ENCODE measurements at regions of chr14 and their contacts with region 1.

Region 1: GRCh38 chr14:61160798-61161197 is 120.3 kb downstream of the TMEM30B start:
- DNase-seq: no peak
- ATAC-seq: no peak
- H3K4me3 ChIP-seq: no peak overlapping the region
- H3K27ac ChIP-seq: no peak overlapping the region
- H3K4me1 ChIP-seq: no peaks in the 10 kb centered on the region
- H3K27me3 ChIP-seq: no peaks in the 10 kb centered on the region
- CTCF ChIP-seq: no peak

Region 2: GRCh38 chr14:61196792-61197191 is 36.0 kb after region 1 on chr14:
- intact Hi-C with region 1: loop called in 1 of 10 experiments (anchors 2 kb)
- DNase-seq: no peak
- ATAC-seq: no peak
- H3K4me3 ChIP-seq: no peak overlapping the region
- H3K27ac ChIP-seq: no peak overlapping the region
- H3K4me1 ChIP-seq: no peaks in the 10 kb centered on the region
- H3K27me3 ChIP-seq: peaks cover 0 to 26% (median 0%) of the 10 kb centered on the region in 7 donors
- CTCF ChIP-seq: no peak

Region 3: GRCh38 chr14:61252369-61253063 is 91.7 kb after region 1 on chr14:
- intact Hi-C with region 1: no loop called
- DNase-seq: peak; percentile 18 to 73
- ATAC-seq: peak in 7 of 8 donors; percentile 86 to 96 (median 95)
- H3K4me3 ChIP-seq: no peak overlapping the region
- H3K27ac ChIP-seq: no peak overlapping the region
- H3K4me1 ChIP-seq: peaks cover 0 to 10% (median 3%) of the 10 kb centered on the region in 9 donors
- H3K27me3 ChIP-seq: no peaks in the 10 kb centered on the region
- CTCF ChIP-seq: peak; percentile 50 to 90 (median 84)

Region 4: GRCh38 chr14:61662437-61663311 is 501.9 kb after region 1 on chr14:
- intact Hi-C with region 1: no loop called
- DNase-seq: no peak
- ATAC-seq: peak; percentile 33 to 72 (median 62)
- H3K4me3 ChIP-seq: peak overlapping the region in 1 of 10 donors; percentile 22
- H3K27ac ChIP-seq: peak overlapping the region in 1 of 10 donors; percentile 86
- H3K4me1 ChIP-seq: peaks cover 0 to 51% (median 6%) of the 10 kb centered on the region in 9 donors
- H3K27me3 ChIP-seq: no peaks in the 10 kb centered on the region
- CTCF ChIP-seq: no peak

Measured in heart right ventricle (tissue), 16 donors.